ENCODE measurements at regions of chr11 and their contacts with region 1.

Region 1: DNA sequence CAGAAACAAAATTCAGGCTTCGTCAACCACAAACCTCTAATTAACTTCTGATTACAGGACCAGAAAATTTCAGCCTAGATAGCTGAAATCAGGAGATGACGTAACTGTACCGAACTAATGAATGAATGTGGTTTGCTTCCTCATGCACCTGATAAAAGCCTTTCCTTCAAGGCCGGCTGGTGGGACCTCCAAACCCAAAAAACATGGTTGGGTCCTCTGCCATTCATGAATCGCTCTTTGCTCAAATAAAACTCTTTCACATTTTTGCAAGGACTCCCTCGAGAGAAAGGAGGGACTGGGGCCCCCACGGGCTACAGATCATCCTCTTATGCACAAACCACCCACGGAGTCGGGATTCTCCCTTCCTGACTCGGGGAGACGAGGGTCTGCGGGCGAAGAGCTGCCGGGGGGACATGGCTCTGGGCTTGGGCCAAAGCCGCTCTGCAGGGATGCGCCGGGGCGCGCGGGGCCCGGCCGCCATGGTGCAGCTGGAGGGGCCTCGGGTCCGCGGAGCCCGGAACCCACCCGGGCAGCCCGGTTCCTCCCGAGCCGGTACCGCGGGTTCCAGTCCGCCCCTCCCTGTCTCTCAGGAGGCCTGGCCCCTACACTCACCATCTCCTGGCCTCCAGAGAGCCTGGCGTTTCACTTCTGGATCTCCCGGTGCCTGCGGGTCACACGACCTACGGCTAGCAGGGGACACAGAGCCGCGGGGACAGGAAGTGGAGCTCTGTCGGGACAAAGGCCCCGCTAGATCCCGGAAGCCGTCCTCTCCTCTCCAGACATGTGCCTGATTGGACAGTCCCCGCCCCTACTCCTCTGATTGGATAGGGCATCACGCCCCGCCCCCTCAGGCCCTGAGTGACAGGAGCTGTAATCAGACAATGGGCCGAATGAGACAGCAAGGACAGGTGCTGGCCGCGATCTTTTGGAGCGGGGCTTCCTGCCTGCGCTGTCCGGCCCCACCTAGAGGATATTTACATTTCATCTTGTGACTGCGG is at the start of gene ZNF195:
- DNase-seq: peak; percentile 100
- H3K4me3 Mint-ChIP-seq: peak within 1 kb of the TSS; percentile 90
- H3K27ac Mint-ChIP-seq: peak within 1 kb of the TSS; percentile 95
- H3K4me1 Mint-ChIP-seq: peaks cover 45% of the 10 kb centered on the region
- H3K27me3 Mint-ChIP-seq: no peaks in the 10 kb centered on the region
- total RNA-seq, gene ZNF195: 33.8 to 34.3 TPM

Region 2: DNA sequence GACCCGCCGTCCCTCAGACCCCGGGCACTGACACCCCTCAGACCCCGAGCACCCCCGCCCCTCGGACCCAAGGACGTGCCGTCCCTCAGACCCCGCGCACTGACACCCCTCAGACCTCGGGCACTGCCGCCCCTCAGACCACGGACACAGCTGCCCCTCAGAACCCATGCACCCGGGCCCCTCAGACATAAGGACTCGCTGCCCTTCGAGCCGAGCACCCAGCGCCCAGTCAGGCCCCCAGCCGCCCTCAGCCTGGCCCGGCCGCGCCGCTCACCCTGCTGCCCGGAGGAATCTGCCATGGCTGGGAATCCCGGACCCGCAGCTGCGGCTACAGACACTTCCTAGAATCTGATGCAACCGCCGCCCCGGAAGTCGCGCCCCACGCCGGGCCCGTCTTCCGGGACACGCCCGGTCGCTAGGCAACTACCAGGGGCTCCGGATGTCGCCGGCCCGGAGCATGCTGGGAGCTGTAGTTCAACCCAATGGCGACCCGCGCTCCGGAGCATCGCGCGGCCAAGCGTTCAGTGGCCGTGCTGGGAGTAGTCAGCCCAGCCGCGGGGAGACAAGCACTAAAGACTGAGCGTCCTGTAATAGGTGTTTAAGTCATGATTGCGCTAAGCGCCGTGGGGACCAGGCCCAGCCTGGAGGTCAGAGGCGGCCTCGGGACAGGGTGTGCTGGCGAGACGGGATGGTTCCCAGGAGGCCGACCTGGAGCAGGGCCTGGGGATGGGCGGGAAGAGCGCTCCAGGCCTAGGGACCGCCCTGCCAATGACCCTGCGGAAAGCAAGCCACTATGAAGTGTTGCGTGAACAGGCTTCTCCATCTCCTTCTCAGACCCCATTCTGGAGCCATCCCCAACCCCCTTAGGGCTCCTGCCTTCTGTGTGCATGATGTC is 321.4 kb before region 1 on chr11 and contains the start of gene CARS1:
- CTCF ChIA-PET with region 1: interaction called, 3 read pairs
- POLR2A ChIA-PET with region 1: no interaction called
- intact Hi-C with region 1: loop called (anchors 5 kb)
- DNase-seq: peak; percentile 97
- H3K4me3 Mint-ChIP-seq: peak within 1 kb of the TSS; percentile 89
- H3K27ac Mint-ChIP-seq: peak within 1 kb of the TSS; percentile 85
- H3K4me1 Mint-ChIP-seq: peaks cover 36% of the 10 kb centered on the region
- H3K27me3 Mint-ChIP-seq: no peaks in the 10 kb centered on the region
- total RNA-seq, gene CARS1: 94.7 to 97.5 TPM

Region 3: DNA sequence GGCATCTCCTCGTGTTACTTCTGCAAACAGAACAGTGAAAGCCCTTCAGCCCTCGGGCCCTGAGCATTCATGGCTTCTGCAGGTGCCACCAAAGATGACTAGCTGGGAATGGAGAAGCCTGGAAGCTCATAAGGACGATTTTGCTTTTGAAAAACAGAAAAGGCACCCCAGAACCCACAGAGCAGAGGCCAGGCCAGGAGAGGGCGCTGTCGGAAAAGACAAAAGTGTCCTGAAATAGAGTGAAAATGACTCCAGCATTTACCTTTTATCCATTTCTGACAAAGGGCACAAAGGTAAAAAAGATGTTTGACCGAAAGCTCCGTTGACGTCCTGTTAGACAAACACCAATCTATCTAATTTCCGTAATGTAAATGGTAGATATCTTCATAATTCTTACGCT is 37.4 kb before region 1 on chr11:
- CTCF ChIA-PET with region 1: interaction called, 14 read pairs
- POLR2A ChIA-PET with region 1: no interaction called
- intact Hi-C with region 1: no loop called
- DNase-seq: peak; percentile 79
- H3K4me3 Mint-ChIP-seq: no peak overlapping the region
- H3K27ac Mint-ChIP-seq: no peak overlapping the region
- H3K4me1 Mint-ChIP-seq: no peaks in the 10 kb centered on the region
- H3K27me3 Mint-ChIP-seq: peaks cover 32% of the 10 kb centered on the region

Region 4: DNA sequence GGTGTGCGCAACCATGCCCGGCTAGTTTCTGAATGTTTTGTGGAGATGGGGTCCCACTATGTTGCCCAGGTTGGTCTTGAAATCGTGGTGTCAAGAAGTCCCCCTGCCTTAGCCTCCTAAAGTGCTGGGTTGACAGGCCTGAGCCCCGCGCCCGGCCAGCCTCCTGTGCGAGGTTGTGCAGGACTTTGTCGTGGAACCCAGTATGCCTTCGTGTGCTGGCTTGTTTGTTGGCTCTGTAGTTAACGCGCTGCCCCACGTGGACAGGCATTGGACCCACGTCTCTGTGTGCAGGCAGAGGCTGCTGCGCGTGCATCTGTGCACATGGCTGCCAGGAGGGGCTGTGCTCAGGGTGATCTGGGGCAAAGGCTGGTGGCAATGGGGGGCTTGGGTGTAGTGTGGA is 34.1 kb after region 1 on chr11:
- CTCF ChIA-PET with region 1: interaction called, 15 read pairs
- POLR2A ChIA-PET with region 1: no interaction called
- intact Hi-C with region 1: no loop called
- DNase-seq: no peak
- H3K4me3 Mint-ChIP-seq: no peak overlapping the region
- H3K27ac Mint-ChIP-seq: no peak overlapping the region
- H3K4me1 Mint-ChIP-seq: peaks cover 2% of the 10 kb centered on the region
- H3K27me3 Mint-ChIP-seq: no peaks in the 10 kb centered on the region

Region 5: DNA sequence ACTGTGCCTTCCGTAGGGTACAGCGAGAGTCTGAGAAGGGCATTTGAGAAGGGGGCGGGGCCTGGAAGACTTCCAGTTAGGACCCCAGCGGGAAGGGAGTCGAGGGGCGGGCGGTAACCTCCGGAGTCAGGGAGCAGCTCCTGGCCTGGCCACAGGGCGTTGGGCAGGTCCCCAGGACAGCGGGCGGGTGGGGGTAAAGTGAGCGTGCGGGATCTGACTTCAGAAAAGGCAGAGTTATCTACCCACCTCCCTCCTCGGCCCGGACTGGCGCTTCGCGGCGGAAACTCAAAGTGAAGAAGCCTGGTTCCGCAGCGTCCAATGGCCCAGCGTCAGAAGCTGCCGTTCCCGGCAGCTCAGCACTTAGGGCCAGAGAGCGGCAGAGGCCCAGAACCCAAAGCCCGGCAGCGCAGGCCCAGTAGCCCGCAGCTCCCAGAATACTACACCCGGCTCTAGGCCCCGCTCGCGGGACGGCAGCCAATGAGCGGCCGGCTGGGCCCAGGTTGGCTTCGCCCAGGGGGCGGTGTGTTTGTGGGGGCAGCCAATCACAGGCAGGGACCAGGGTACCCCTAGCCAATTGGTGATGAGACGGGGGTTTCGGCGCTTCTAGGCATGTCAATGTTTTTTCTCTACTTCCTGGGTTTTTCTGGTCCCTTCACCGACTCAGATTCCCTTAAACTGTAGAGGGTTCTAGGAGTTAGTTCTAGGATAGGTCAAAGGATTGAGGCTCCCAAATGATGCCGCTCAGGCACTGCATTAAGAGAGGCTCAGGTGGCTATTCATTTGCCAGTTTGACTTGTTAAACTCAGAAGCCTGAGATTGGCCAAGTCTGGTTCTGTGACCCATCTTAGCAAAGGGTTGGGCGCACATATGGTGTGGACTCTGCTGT is 1229.3 kb after region 1 on chr11 and contains the start of gene TRIM68:
- CTCF ChIA-PET with region 1: no interaction called
- POLR2A ChIA-PET with region 1: no interaction called
- intact Hi-C with region 1: no loop called
- DNase-seq: peak; percentile 97
- H3K4me3 Mint-ChIP-seq: peak within 1 kb of the TSS; percentile 93
- H3K27ac Mint-ChIP-seq: peak within 1 kb of the TSS; percentile 87
- H3K4me1 Mint-ChIP-seq: peaks cover 34% of the 10 kb centered on the region
- H3K27me3 Mint-ChIP-seq: no peaks in the 10 kb centered on the region
- total RNA-seq, gene TRIM68: 8.7 to 9.2 TPM